MCF 10A (cell line): ENCODE measurements at regions of chr14 and their contacts with region 1.

Region 1: GRCh38 chr14:85516239-85517112 is 13.5 kb upstream of the FLRT2 start:
- DNase-seq: peak; percentile 80
- H3K4me3 Mint-ChIP-seq: peak overlapping the region; percentile 53
- H3K27ac Mint-ChIP-seq: peak overlapping the region; percentile 74
- H3K4me1 Mint-ChIP-seq: peaks cover 26% of the 10 kb centered on the region
- H3K27me3 Mint-ChIP-seq: no peaks in the 10 kb centered on the region
- CTCF ChIP-seq: no peak

Region 2: DNA sequence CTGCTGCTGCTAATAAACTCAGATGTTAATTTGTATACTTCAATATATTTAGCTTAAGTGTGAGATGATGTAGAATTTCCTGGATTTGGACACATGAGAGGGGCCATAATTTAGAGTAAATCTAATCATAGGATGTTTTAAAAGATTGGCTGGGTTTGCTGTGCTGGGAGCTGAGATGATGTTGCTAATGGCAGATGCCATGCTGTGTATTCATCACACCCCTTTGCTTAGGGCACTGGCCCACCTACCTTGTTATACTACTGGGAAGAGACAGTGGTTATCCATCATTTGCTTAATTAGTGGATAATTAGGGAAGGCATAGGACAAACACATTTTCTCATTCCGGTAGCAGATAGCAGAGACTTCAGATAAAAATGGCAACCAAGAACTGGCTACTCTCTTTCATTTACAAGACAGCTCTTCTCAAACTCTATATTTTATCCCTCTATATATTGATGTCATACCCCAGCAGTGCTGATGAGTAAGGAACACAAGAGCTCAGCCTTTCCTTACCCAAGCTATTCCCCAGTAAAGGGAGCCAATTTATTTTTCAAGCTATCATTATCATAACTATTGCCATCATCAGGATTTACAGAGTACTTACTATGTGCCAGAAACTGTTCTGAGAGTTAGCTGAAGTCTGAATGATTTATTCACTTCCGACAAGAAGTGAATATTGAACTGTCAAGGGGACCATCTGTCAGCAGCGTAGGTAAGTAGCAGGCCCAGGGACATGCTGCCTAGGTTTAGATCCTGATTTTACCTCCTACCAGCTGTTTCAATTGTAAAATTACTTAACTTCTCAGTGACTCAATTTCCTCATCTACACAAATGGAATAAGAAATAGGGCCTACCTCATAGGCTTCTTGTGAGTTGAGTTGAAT is 191.1 kb before region 1 on chr14:
- CTCF ChIA-PET with region 1: no interaction called
- POLR2A ChIA-PET with region 1: no interaction called
- intact Hi-C with region 1: loop called (anchors 5 kb)
- DNase-seq: no peak
- H3K4me3 Mint-ChIP-seq: no peak overlapping the region
- H3K27ac Mint-ChIP-seq: no peak overlapping the region
- H3K4me1 Mint-ChIP-seq: no peaks in the 10 kb centered on the region
- H3K27me3 Mint-ChIP-seq: no peaks in the 10 kb centered on the region
- CTCF ChIP-seq: no peak